PC-9 (cell line): ENCODE measurements at regions of chr16 and their contacts with region 1.

Region 1: GRCh38 chr16:27235055-27235937 is 32.0 kb downstream of the KDM8 start:
- DNase-seq: peak; percentile 58 to 88
- H3K4me3 ChIP-seq: no peak overlapping the region
- H3K27ac ChIP-seq: no peak overlapping the region
- H3K4me1 ChIP-seq: no peaks in the 10 kb centered on the region
- H3K27me3 ChIP-seq: no peaks in the 10 kb centered on the region
- CTCF ChIP-seq: peak; percentile 93

Region 2: DNA sequence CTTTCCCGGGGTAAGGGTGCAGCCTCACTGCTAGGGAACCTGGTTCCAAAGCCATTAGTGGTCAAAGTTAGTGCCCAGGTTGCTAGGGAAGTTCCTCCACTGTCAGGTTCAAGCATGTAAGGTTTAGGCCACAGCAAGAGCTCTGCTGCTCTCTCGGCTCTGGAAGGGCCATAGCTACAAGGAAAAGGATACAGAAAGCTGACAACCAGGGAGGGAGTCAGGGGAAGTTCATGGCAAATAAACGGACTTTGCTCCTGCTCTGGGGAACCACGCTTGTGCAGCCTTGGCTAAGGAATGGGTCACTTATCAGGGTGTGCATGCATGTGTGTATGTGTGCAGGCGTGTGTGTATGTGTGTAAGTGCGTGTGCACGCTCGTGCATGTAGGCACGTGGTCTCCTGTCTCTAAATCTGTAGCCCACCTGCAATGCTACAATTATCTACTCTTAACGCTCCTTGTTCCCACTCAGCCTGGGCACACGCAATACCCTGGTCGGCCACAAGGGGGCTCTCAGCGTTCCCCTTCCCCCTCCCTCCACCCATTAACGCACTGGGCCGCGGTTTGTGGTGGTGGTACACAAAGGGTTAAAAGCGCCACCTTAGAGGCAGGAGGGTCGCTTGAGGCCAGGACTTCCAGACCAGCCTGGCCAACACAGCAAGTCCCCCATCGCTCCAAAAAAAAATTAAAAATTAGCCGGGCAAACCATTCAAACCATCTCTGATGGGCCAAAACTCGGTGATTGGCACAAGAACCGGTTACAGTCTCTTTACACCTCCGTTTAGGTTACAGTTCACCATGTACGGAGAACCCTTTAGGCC is 80.4 kb before region 1 on chr16:
- CTCF ChIA-PET with region 1: no interaction called
- POLR2A ChIA-PET with region 1: no interaction called
- intact Hi-C with region 1: loop called (anchors 1 kb)
- DNase-seq: peak in 1 of 2 experiments; percentile 47
- H3K4me3 ChIP-seq: no peak overlapping the region
- H3K27ac ChIP-seq: no peak overlapping the region
- H3K4me1 ChIP-seq: no peaks in the 10 kb centered on the region
- H3K27me3 ChIP-seq: peaks cover 19% of the 10 kb centered on the region; the same call in 1 of the 2 replicates
- CTCF ChIP-seq: peak; percentile 100

Region 3: DNA sequence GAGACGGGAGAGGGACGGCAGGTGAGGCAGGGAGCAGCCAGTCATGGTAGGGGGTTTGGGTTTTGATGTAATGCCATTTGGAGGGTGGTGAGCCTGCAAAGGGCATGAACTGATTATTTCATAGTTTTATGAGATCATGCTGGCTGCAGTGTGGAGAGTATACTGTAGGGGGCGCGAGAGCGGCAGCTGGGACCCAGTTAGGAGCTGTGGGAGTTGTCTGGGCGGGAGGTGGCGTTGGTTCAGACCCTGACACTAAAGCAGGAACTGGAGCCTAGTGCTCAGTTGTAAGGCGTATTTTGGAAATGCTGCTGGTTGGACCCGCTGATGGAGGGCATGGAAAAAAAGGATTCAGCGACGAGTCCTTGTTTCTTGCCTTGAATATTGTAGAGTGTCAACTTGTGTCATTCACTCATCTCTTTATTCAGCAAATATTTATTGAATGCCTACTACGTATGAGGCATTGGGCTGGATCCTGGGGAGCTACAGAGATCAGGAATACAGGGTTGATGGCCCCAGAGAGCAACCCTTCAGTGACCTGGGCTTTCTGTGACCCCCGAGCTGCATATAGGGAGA is 55.7 kb before region 1 on chr16:
- CTCF ChIA-PET with region 1: interaction called, 3 read pairs
- POLR2A ChIA-PET with region 1: no interaction called
- intact Hi-C with region 1: loop called (anchors 2 kb)
- DNase-seq: peak; percentile 55 to 65
- H3K4me3 ChIP-seq: no peak overlapping the region
- H3K27ac ChIP-seq: no peak overlapping the region
- H3K4me1 ChIP-seq: 0 out of 2 replicates have a peak, but pooled peaks cover 1% of the 10 kb centered on the region
- H3K27me3 ChIP-seq: peaks cover 19% of the 10 kb centered on the region; the same call in 1 of the 2 replicates
- CTCF ChIP-seq: peak; percentile 88

Region 4: GRCh38 chr16:27326738-27327585 is 91.7 kb after region 1 on chr16:
- CTCF ChIA-PET with region 1: interaction called, 6 read pairs
- POLR2A ChIA-PET with region 1: no interaction called
- intact Hi-C with region 1: loop called (anchors 1 kb)
- DNase-seq: peak; percentile 97 to 99
- H3K4me3 ChIP-seq: peak overlapping the region; percentile 11; the same call in 1 of the 2 replicates
- H3K27ac ChIP-seq: peak overlapping the region; percentile 98
- H3K4me1 ChIP-seq: peaks cover 60% of the 10 kb centered on the region
- H3K27me3 ChIP-seq: no peaks in the 10 kb centered on the region
- CTCF ChIP-seq: 0 out of 2 replicates have a peak, but pooled peaks have one; percentile 34

Region 5: DNA sequence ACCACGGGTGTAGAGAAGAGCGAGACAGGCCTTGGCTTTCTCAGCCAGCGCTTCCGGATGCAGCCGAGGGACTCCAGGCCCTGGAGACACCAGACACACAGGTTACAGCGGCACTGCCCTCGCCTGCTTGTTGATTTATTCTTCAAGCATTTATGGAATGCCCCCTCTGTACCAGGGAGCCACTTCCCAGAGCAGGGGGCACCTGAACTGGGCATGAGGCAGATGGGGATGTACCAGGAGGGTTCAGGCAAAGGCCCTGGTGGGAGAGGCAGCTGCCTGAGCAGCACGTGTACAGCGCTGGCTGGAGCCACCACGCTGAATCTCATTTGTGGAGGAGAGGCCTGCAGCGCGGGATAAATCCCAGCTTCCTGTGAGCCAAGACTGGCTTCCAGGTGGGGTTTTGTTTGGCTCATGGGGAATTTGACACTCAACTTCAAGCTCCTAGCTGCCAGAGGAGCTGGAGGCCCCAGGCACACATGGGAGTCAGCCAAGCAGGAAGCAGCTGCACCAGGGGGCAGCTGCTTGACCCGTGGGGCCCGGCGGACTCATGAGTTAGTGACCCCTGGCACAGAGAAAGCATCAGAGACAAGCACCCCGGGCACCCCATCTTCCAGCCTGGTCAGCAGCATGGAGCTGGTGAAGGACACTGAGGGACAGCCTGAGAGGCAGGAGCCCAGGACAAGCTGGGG is 226.3 kb after region 1 on chr16:
- CTCF ChIA-PET with region 1: no interaction called
- POLR2A ChIA-PET with region 1: interaction called, 4 read pairs
- intact Hi-C with region 1: loop called (anchors 1 kb)
- DNase-seq: peak in 1 of 2 experiments; percentile 68
- H3K4me3 ChIP-seq: no peak overlapping the region
- H3K27ac ChIP-seq: no peak overlapping the region
- H3K4me1 ChIP-seq: no peaks in the 10 kb centered on the region
- H3K27me3 ChIP-seq: no peaks in the 10 kb centered on the region
- CTCF ChIP-seq: no peak